Caco-2 (cell line): ENCODE measurements at regions of chr10 and their contacts with region 1.

Region 1: DNA sequence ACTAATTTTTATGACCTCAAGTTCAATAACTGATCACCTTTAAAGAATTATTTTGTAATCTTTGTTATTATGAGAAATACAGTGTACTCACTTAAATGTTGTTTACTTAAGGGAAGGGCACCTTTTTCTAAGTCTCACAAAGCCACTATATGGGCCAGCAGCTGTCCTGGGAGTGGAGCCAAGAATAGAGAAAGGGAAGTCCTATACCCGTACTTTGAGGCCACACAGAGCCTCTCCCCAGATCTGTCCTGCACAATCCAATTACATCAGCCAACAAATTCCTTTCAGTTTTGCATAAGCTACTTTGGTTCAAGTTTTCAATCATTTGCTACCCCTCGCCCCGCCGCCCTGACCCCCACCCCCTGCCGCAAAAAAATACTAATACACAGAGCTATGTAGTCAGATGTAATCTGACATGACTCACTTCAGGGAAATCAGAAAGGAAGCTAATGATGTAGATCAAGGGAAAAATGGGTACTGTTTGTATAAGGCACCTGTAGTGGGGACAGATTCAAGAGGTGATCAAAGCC is 297.4 kb upstream of the NEBL start:
- DNase-seq: no peak
- H3K4me3 ChIP-seq: no peak overlapping the region
- H3K4me3 Mint-ChIP-seq: peak overlapping the region; percentile 27
- H3K27ac Mint-ChIP-seq: peak overlapping the region; percentile 74
- H3K4me1 ChIP-seq: peaks cover 19% of the 10 kb centered on the region
- H3K4me1 Mint-ChIP-seq: peaks cover 28% of the 10 kb centered on the region
- H3K27me3 ChIP-seq: no peaks in the 10 kb centered on the region
- H3K27me3 Mint-ChIP-seq: no peaks in the 10 kb centered on the region
- CTCF ChIP-seq: no peak

Region 2: DNA sequence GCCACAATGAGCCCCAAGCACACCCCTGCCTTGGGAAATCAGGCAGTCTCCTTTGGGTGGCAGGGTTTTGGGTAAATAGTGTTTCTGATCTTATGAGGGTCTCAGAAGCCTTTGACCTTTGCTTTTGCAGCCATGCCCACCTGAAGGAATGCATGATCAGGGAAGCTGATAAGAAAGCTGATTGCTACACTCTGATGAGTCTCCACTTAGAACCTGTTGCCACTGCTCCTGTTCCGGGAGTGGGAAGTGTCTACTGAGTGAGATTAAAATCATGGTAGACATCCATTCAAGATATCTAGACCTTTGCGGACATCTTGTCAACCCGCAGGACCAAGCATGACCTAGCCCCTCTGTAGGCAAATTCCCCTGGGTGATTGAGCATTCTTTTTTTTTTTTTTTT is 48.4 kb after region 1 on chr10:
- CTCF ChIA-PET with region 1: no interaction called
- POLR2A ChIA-PET with region 1: no interaction called
- intact Hi-C with region 1: loop called (anchors 1 kb)
- DNase-seq: peak; percentile 62 to 71
- H3K4me3 ChIP-seq: no peak overlapping the region
- H3K4me3 Mint-ChIP-seq: peak overlapping the region; percentile 61
- H3K27ac Mint-ChIP-seq: peak overlapping the region; percentile 84
- H3K4me1 ChIP-seq: peaks cover 19% of the 10 kb centered on the region
- H3K4me1 Mint-ChIP-seq: peaks cover 26% of the 10 kb centered on the region
- H3K27me3 ChIP-seq: no peaks in the 10 kb centered on the region
- H3K27me3 Mint-ChIP-seq: no peaks in the 10 kb centered on the region
- CTCF ChIP-seq: no peak

Region 3: GRCh38 chr10:21265621-21266020 is 71.1 kb after region 1 on chr10:
- CTCF ChIA-PET with region 1: no interaction called
- POLR2A ChIA-PET with region 1: no interaction called
- intact Hi-C with region 1: loop called (anchors 1 kb)
- DNase-seq: no peak
- H3K4me3 ChIP-seq: no peak overlapping the region
- H3K4me3 Mint-ChIP-seq: no peak overlapping the region
- H3K27ac Mint-ChIP-seq: no peak overlapping the region
- H3K4me1 ChIP-seq: peaks cover 21% of the 10 kb centered on the region
- H3K4me1 Mint-ChIP-seq: no peaks in the 10 kb centered on the region
- H3K27me3 ChIP-seq: no peaks in the 10 kb centered on the region
- H3K27me3 Mint-ChIP-seq: no peaks in the 10 kb centered on the region
- CTCF ChIP-seq: no peak